K562 (cell line): ENCODE measurements at regions of chr16 and their contacts with region 1.

Region 1: GRCh38 chr16:15949210-15950160 is at the start of gene ABCC1:
- DNase-seq: peak; percentile 71 to 93 (median 90)
- ATAC-seq: peak; percentile 80
- H3K4me3 ChIP-seq: peak within 1 kb of the TSS; percentile 90
- H3K27ac ChIP-seq: peak within 1 kb of the TSS; percentile 83
- H3K4me1 ChIP-seq: peaks cover 23 to 33% of the 10 kb centered on the region in 2 experiments; a peak in 4 of 5 replicates
- H3K27me3 ChIP-seq: no peaks in the 10 kb centered on the region
- CTCF ChIP-seq: peak in 1 of 3 experiments; percentile 29; a peak in 2 of 6 replicates
- EP300 ChIP-seq: no peak
- POLR2A ChIP-seq: peak; percentile 49; the same call in 1 of the 2 replicates
- RAD21 ChIP-seq: peak in 1 of 2 experiments; percentile 19; a peak in 2 of 4 replicates
- polyA plus RNA-seq, gene ABCC1: 3.9 to 4.4 TPM

Region 2: DNA sequence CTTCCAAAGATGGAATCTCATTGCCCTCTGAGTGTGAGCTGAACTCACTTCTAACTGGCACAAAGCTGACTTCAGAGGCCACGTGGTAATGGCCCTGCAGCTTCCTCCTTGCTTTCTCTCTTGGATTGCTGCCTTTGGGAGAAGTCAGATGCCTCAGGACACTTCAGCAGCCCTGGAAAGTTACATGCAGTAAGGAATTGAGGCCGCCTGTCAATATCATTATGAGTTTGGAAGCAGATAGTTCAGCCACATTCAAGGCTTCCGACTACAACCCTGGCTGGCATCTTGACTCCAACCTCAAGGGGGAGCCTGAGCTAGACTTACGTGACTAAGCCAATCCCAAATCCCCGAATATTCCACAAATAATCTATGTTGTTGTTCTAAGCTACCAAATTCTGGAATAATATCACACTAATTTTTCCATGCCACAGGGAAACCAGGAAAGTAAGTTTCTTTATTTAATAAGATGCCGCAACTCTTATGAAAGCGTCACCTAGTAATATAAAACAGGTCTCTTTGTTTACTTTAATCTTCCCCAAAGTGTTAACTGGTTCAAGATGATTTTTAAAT is 74.7 kb before region 1 on chr16:
- CTCF ChIA-PET with region 1: no interaction called
- POLR2A ChIA-PET with region 1: no interaction called
- in situ Hi-C with region 1: no loop called
- intact Hi-C with region 1: loop called (anchors 10 kb)
- DNase-seq: peak in 3 of 4 experiments; percentile 23 to 60 (median 42)
- ATAC-seq: peak; percentile 83
- H3K4me3 ChIP-seq: no peak overlapping the region
- H3K27ac ChIP-seq: peak overlapping the region; percentile 24; the same call in 1 of the 3 replicates
- H3K4me1 ChIP-seq: peaks cover 3 to 10% of the 10 kb centered on the region in 2 experiments; a peak in 4 of 5 replicates
- H3K27me3 ChIP-seq: no peaks in the 10 kb centered on the region
- CTCF ChIP-seq: peak; percentile 46 to 75 (median 67)
- EP300 ChIP-seq: no peak
- POLR2A ChIP-seq: no peak
- RAD21 ChIP-seq: peak; percentile 38 to 72; a peak in 3 of 4 replicates

Region 3: GRCh38 chr16:15961060-15961511 is 11.6 kb after region 1 on chr16:
- CTCF ChIA-PET with region 1: no interaction called
- POLR2A ChIA-PET with region 1: interaction called, 10 read pairs
- in situ Hi-C with region 1: no loop called
- intact Hi-C with region 1: no loop called
- DNase-seq: no peak
- ATAC-seq: no peak
- H3K4me3 ChIP-seq: no peak overlapping the region
- H3K27ac ChIP-seq: no peak overlapping the region
- H3K4me1 ChIP-seq: no peaks in the 10 kb centered on the region
- H3K27me3 ChIP-seq: no peaks in the 10 kb centered on the region
- CTCF ChIP-seq: no peak
- EP300 ChIP-seq: no peak
- POLR2A ChIP-seq: no peak
- RAD21 ChIP-seq: no peak

Region 4: DNA sequence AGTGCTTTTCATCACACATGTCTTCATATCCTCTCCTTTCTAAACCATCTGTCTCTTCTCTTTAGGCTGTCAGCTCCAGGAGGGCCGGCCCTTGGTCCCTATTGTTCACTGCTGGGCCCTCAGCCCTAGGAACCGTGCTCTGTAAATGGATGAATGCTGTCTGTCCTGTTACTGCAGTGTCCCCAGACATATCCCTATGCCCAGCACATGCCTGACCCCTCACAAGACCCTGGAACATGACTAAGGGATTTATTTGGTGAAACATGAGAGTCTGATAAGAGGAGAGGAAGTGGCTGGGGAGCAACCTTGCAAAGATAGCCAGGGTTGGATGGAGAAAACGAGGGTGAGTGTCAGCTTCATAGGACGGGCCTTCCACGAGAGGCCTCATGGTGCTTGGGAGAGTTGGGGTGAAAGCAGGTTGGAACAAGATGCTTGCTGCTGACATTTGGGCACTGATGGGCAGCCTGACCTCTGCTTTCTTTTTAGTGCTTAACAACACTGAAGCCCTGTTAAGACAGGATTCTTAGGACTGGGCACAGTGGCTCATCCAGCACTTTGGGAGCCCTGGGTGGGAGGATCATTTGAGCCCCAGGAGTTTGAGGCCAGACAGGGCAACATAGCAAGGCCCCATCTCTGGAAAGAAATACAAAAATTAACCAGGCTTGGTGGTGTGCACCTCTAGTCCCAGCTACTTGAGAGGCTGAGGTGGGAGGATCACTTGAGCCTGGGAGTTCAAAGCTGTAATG is 39.0 kb after region 1 on chr16:
- CTCF ChIA-PET with region 1: no interaction called
- POLR2A ChIA-PET with region 1: interaction called, 4 read pairs
- in situ Hi-C with region 1: no loop called
- intact Hi-C with region 1: loop called (anchors 5 kb)
- DNase-seq: peak; percentile 66 to 94 (median 78)
- ATAC-seq: peak; percentile 86
- H3K4me3 ChIP-seq: no peak overlapping the region
- H3K27ac ChIP-seq: peak overlapping the region; percentile 90
- H3K4me1 ChIP-seq: peaks cover 39 to 43% of the 10 kb centered on the region in 2 experiments
- H3K27me3 ChIP-seq: no peaks in the 10 kb centered on the region
- CTCF ChIP-seq: no peak
- EP300 ChIP-seq: peak; percentile 91
- POLR2A ChIP-seq: peak; percentile 52; the same call in 1 of the 2 replicates
- RAD21 ChIP-seq: no peak